ENCODE measurements at regions of chr10 and their contacts with region 1.

Region 1: GRCh38 chr10:987870-988666 is at the start of gene GTPBP4:
- DNase-seq: peak; percentile 99
- H3K4me3 ChIP-seq: peak within 1 kb of the TSS; percentile 63 to 97
- H3K27ac ChIP-seq: peak within 1 kb of the TSS; percentile 83 to 86
- H3K4me1 ChIP-seq: peaks cover 5% of the 10 kb centered on the region
- H3K27me3 ChIP-seq: no peaks in the 10 kb centered on the region
- CTCF ChIP-seq: peak in 2 of 4 experiments; percentile 36 to 53
- POLR2A ChIP-seq: peak; percentile 52
- total RNA-seq, gene GTPBP4: 15.6 to 39.9 TPM

Region 2: DNA sequence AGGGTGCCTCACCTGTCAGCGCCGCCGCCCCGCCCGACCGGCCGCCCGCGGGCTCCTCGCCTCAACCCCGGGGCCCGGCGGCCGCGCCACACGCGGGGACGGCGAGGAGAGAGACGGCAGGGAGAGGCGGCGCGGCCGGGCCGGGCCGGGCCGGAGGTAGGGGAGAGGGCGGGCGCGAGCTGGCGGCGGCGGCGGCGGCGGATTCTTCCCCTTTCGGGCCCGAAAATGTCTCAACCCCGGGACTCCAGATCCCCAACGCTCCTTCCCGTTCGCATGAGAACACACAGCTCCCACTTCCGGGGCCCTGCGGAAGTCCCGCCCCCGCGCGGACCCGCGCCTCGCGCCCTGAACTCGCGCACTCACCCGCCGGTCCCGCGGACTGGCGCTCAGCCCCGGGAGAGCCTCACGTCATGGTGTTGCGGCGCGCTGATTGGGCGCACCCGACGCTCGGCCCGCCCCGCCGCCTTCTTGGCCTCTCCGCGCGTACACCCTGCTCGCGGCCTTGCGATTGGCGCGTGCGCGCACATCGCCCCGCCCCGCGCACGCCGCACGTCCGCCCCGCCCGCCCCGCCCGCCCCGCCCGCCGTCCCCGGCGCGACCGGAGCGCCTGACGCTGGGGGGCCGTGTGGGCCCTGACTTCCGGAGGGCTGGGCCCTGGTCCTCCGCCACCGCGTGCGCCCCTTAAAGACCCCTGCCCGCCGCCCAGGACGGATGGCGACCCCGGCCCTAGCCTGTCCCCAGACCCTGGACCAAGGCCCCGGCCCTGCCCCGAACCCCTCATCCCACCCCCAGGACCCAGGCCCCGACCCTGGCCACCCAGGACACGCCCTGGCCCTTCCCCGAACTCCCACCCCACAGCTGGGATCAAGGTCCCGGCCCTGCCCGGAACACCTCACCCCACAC is 56.4 kb before region 1 on chr10 and contains the start of gene LARP4B:
- intact Hi-C with region 1: loop called (anchors 5 kb)
- DNase-seq: peak; percentile 96
- H3K4me3 ChIP-seq: peak within 1 kb of the TSS; percentile 80 to 82
- H3K27ac ChIP-seq: peak within 1 kb of the TSS; percentile 91 to 97
- H3K4me1 ChIP-seq: no peaks in the 10 kb centered on the region
- H3K27me3 ChIP-seq: no peaks in the 10 kb centered on the region
- CTCF ChIP-seq: peak in 1 of 4 experiments; percentile 18
- POLR2A ChIP-seq: peak; percentile 85
- total RNA-seq, gene LARP4B: 51.9 to 95.4 TPM

Region 3: GRCh38 chr10:1180836-1181235 is 192.8 kb after region 1 on chr10:
- intact Hi-C with region 1: no loop called
- DNase-seq: no peak
- H3K4me3 ChIP-seq: no peak overlapping the region
- H3K27ac ChIP-seq: no peak overlapping the region
- H3K4me1 ChIP-seq: no peaks in the 10 kb centered on the region
- H3K27me3 ChIP-seq: no peaks in the 10 kb centered on the region
- CTCF ChIP-seq: no peak
- POLR2A ChIP-seq: no peak

Region 4: DNA sequence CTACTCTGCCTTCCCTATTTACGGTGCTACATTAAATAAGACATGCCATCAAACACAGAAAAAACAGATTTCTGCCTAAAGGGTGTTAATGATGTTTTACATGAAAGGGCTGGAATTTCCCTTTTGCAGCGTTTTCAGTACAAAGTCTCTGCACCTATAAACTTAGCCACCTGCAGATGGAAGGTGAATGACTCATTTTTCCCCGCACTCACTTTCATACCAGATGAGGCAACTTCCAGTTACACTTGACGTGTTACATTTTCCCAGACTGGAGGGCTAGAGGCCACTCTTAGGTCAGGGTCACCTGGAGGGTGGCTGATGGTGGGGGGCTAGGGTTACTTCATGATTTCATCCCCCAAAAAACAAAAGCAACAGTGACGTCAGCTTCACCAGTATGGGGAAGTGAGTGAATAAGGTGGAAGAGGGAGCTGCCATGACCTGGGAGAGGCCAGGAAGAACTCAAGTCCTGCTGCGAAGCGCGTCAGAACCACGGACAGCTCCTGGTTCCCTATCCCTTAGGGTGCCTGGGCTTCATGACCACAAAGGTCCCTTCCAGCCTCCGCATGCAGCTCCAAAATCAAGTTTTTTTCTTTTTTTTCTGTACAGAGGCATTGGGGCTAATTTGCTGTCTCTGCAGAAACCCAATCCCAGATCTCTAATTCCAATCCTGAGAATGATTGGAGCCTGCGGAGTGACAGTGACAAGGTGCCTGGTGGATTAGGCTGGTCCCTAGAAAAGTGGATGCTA is 655.3 kb after region 1 on chr10:
- intact Hi-C with region 1: no loop called
- DNase-seq: no peak
- H3K4me3 ChIP-seq: no peak overlapping the region
- H3K27ac ChIP-seq: no peak overlapping the region
- H3K4me1 ChIP-seq: no peaks in the 10 kb centered on the region
- H3K27me3 ChIP-seq: no peaks in the 10 kb centered on the region
- CTCF ChIP-seq: no peak
- POLR2A ChIP-seq: no peak